Transverse colon (tissue), 4 donors: ENCODE measurements at regions of chr5 and their contacts with region 1.

Region 1: DNA sequence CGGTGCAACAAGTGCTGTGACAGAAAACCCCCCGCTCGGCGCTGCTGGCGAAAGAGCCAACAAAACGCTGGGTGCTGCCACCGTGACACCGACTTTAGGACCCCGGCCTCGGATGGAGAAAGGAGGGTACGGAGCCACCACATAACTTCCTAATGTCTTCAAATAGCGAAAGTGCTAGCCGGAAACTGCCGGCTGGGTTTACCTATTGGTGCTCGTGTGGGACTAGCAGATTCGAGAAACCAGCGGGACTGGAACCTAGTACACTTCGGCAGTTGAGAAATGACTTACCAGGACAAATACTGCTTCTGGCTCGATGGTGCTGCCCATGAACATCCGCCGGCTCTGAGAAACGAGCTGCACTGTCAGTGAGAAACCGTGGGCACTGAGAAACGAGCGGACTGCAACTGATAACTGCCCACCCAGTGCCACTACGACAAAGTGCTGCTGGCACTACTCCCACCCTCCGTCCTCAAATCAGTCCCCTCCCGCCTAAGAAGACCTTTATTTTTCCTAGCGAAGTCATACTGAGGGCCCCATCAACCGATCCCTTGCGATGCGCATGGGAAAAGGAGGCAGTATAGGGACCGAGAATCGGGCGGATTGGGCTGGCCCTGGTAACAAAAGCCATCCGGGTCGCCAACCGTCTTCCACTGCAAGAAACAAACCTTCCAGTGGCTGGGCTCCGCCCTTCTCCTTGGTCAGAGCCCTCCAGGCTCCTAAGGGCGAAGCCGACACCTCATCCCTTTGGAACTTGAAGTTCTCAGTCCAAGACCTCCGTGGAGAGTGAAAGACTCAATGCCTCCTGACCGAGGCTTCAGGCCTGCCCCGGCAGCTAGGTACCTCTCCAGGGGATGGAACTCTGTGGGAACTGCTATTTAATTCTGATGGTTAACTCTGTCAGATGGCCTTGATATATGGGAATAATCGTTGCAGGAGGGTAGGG is 27.0 kb upstream of the ANXA2R start:
- DNase-seq: peak; percentile 91
- H3K4me3 ChIP-seq: peak overlapping the region; percentile 57 to 86 (median 76)
- H3K27ac ChIP-seq: peak overlapping the region; percentile 95 to 100 (median 98)
- H3K4me1 ChIP-seq: peaks cover 15 to 41% (median 26%) of the 10 kb centered on the region in 4 donors
- H3K27me3 ChIP-seq: no peaks in the 10 kb centered on the region
- CTCF ChIP-seq: no peak
- EP300 ChIP-seq: no peak
- POLR2A ChIP-seq: peak; percentile 50

Region 2: DNA sequence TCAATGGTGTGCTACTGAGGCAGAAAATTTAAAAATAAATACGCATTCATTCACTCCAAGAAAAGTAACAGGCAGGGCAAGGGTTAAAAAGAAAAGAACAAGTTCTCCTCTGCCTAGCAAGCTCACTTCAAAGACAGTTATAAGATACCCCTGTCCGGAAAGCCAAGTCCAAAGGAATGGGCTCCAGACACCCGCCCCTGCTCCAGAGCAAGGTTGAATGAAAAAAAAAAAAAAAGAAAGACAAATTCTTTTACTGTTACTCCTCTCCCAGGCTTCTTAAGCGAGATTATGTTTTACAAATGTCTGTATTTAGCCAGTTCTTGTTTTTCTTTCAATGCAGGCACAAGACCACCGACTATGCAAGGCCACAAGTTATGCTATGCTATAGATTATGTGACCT is 17.8 kb before region 1 on chr5:
- in situ Hi-C with region 1: no loop called
- intact Hi-C with region 1: loop called (anchors 2 kb)
- DNase-seq: no peak
- H3K4me3 ChIP-seq: no peak overlapping the region
- H3K27ac ChIP-seq: no peak overlapping the region
- H3K4me1 ChIP-seq: no peaks in the 10 kb centered on the region
- H3K27me3 ChIP-seq: no peaks in the 10 kb centered on the region
- CTCF ChIP-seq: no peak
- EP300 ChIP-seq: no peak
- POLR2A ChIP-seq: no peak